HEK293 (cell line): ENCODE measurements at regions of chr19 and their contacts with region 1.

Region 1: DNA sequence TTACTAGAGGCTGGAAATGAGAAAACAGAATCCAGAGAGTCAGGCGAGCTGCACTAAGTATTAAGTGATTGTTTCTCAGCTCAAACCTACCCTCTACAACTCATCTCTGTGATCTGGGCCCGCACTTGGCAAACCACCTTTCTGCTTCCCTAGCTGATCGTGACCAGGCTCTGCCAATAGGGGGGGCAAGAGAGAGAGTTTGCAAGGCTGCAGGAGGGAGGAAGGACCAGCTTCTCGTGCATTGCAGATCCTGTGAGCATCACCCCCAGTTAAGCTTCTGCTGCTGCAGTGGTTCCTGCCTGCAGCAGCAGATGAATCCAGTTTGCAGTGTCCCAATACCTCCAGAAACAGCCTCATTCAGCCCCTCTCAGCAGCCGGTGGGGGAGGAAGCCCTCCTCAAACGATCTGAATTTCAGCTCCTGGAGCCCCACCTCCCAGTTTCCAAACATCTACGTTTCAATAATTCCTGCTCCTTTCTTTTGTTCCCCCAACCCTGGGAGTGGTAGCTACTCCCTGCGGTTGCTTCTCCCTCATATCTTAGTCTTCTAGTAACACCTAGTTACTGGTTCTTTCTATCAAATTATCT is 20.0 kb downstream of the XRCC1 start:
- H3K4me3 ChIP-seq: no peak overlapping the region
- H3K27ac ChIP-seq: no peak overlapping the region
- H3K4me1 ChIP-seq: no peaks in the 10 kb centered on the region
- CTCF ChIP-seq: peak; percentile 84

Region 2: DNA sequence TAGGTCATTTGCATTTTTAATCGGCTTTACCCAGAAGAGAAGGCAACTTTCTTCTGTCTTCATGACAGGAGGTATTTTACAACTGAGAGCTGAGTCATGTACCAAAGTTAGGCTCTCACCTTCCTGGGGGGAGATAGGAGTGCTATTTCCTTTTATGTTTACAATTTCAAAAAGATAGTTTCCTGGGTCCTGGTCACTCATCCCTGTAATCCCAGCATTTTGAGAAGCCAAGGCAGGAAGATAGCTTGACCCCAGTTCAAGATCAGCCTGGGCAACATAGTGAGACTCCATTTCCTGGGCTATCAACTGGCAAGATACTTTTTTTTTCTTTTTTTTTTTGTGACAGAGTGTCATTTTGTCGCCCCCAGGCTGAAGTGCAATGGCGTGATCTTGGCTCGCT is 97.5 kb before region 1 on chr19:
- CTCF ChIA-PET with region 1: no interaction called
- POLR2A ChIA-PET with region 1: no interaction called
- H3K4me3 ChIP-seq: no peak overlapping the region
- H3K27ac ChIP-seq: no peak overlapping the region
- H3K4me1 ChIP-seq: peaks cover 3% of the 10 kb centered on the region; the same call in 1 of the 2 replicates
- CTCF ChIP-seq: no peak

Region 3: GRCh38 chr19:43519436-43520088 is 35.7 kb before region 1 on chr19:
- CTCF ChIA-PET with region 1: interaction called, 57 read pairs
- POLR2A ChIA-PET with region 1: no interaction called
- H3K4me3 ChIP-seq: no peak overlapping the region
- H3K27ac ChIP-seq: no peak overlapping the region
- H3K4me1 ChIP-seq: peaks cover 3% of the 10 kb centered on the region; the same call in 1 of the 2 replicates
- CTCF ChIP-seq: peak; percentile 92

Region 4: GRCh38 chr19:43532962-43533545 is 22.2 kb before region 1 on chr19 and contains the start of gene ZNF575:
- CTCF ChIA-PET with region 1: interaction called, 138 read pairs
- POLR2A ChIA-PET with region 1: interaction called, 3 read pairs
- H3K4me3 ChIP-seq: peak within 1 kb of the TSS; percentile 9
- H3K27ac ChIP-seq: peak within 1 kb of the TSS; percentile 73
- H3K4me1 ChIP-seq: peaks cover 26% of the 10 kb centered on the region
- CTCF ChIP-seq: no peak; the same call in 1 of the 2 replicates

Region 5: GRCh38 chr19:43575156-43575950 is 20.1 kb after region 1 on chr19 and contains the starts of genes PINLYP and XRCC1:
- CTCF ChIA-PET with region 1: interaction called, 167 read pairs
- POLR2A ChIA-PET with region 1: interaction called, 10 read pairs
- H3K4me3 ChIP-seq: peak within 1 kb of the TSS; percentile 73
- H3K27ac ChIP-seq: peak within 1 kb of the TSS; percentile 80
- H3K4me1 ChIP-seq: peaks cover 39% of the 10 kb centered on the region
- CTCF ChIP-seq: 0 out of 2 replicates have a peak, but pooled peaks have one; percentile 27

Region 6: DNA sequence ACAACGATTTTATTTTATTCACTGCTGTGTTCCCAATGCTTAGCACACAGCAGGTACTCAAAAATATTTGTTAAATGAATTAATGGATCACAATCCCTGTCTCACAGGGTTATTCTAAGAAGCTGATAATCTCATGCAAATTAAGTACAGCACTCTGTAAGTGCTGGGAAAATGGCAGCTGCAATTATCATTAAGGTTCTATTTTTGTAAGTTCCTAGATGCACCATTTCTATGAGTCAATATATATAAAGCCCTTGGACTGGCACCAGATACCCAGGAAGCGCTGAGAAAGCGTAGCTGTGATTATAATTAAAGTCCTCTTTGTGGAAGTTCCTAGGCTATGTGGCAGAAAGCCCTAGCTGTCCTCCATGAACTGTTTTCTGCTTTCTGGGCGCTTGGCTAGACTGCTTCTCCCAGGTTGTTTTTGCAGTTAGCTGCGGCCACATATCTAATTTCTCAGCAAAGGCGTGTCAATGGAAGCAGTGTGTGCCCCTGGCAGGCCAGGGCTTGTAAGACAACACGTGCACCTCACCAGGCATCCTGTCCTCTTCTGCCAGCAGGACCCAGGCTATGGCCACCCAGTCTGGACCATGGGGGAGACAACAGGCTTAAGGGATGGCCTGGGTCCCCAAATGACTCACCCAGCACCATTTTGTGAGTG is 51.4 kb after region 1 on chr19:
- CTCF ChIA-PET with region 1: interaction called, 11 read pairs
- POLR2A ChIA-PET with region 1: no interaction called
- H3K4me3 ChIP-seq: no peak overlapping the region
- H3K27ac ChIP-seq: peak overlapping the region; percentile 58
- H3K4me1 ChIP-seq: peaks cover 28% of the 10 kb centered on the region
- CTCF ChIP-seq: no peak

Region 7: GRCh38 chr19:43747557-43748204 is 192.4 kb after region 1 on chr19:
- CTCF ChIA-PET with region 1: interaction called, 10 read pairs
- POLR2A ChIA-PET with region 1: interaction called, 5 read pairs
- H3K4me3 ChIP-seq: no peak overlapping the region
- H3K27ac ChIP-seq: 0 out of 2 replicates have a peak overlapping the region, but pooled peaks have one; percentile 17
- H3K4me1 ChIP-seq: no peaks in the 10 kb centered on the region; the same call in 1 of the 2 replicates
- CTCF ChIP-seq: no peak